ENCODE measurements at regions of chr16 and their contacts with region 1.

Region 1: DNA sequence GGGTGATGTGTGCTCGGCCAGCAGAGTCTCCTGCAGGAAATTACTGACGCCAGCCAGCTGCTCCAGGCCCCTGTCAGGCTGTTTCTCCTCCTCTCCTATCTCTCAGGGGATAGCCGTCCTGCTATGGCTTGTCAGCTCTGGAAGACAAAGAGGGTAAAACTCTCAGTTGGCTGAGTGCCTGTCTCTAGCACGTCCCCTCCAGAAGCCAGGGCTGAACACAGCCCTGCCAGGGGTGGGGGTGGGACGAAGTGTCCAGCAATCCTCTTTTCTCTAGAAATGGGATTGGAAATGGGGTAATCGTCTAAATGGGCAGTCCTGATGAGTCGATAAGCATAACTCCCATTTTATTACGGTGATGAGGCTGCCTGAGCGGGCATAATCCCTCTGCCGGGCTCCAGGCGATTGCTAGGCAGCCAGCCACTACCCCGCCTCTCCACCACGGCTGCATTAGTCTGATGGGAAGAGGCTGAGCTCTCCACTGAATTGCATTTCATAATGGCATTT is 89.1 kb upstream of the GNAO1 start:
- DNase-seq: peak; percentile 77
- ATAC-seq: peak; percentile 94

Region 2: GRCh38 chr16:55944377-55944802 is 157.8 kb before region 1 on chr16:
- intact Hi-C with region 1: loop called (anchors 10 kb)
- DNase-seq: peak; percentile 68
- ATAC-seq: peak; percentile 96

Region 3: DNA sequence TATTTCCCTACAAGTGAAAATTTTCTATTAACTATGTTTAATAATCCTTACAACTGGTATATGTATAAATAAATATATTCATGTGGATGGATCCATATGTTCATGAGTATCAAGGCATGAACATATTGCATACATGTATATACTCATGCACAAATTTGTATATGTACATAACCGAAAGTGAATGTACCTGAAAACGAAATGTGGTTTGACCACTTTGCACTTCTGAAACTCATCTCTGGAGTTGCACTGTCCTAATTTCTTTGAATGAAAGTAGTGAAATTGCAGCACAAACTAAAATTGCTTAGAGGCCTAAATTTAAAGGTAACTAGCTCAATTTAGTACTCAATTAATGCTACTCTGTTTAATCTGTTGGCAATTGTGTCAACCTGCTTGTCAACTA is 61.7 kb after region 1 on chr16:
- intact Hi-C with region 1: loop called (anchors 10 kb)
- DNase-seq: no peak
- ATAC-seq: no peak

Region 4: DNA sequence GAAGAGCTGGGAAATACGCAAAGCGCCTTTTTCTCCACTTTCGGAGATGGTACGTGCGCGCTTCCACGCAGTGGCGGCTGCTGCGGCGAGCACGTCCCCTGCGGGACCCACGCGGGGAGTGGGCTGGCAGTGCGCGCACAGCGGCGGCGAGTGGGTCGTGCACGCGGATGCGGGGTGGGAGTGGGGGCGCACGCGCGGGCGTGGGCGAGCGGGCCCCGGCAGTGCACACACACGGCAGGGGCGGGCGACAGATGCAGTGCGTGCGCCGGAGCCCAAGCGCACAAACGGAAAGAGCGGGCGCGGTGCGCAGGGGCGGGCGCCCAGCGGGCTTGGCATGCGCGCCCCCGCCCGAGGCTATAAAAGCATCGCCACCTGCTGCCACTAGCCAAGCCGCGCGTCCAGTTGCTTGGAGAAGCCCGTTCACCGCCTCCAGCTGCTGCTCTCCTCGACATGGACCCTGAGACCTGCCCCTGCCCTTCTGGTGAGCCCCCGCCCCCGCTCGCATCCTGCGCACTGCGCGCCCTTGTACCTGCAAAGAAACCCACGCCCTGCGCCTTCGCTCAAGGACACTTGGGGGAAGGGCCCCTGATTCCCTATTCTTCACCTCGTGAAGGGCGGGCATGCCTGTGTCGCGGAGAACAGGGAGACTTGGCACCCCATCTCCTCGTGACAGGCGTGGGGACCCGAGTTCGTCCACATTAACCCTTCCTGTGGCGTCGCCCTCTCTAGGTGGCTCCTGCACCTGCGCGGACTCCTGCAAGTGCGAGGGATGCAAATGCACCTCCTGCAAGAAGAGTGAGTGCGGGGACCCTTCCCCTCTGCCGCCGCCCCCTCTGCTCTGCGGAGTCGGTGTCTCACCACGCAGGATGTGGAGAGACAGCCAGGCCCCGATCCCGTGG is 487.2 kb after region 1 on chr16 and contains the start of gene MT3:
- intact Hi-C with region 1: no loop called
- DNase-seq: no peak
- ATAC-seq: peak; percentile 41
- total RNA-seq, gene MT3: 5.9 TPM

Measured in Right ventricle myocardium inferior (tissue), 1 donor.